ENCODE measurements at regions of chr3 and their contacts with region 1.

Region 1: GRCh38 chr3:64484289-64484992 is 203.4 kb downstream of the ADAMTS9 start:
- DNase-seq: peak; percentile 81
- H3K4me3 ChIP-seq: no peak overlapping the region
- H3K27ac ChIP-seq: no peak overlapping the region
- H3K4me1 ChIP-seq: peaks cover 4% of the 10 kb centered on the region
- H3K27me3 ChIP-seq: peaks cover 8 to 13% of the 10 kb centered on the region in 2 experiments
- CTCF ChIP-seq: peak; percentile 78 to 81
- POLR2A ChIP-seq: no peak

Region 2: GRCh38 chr3:64023187-64023848 is 461.1 kb before region 1 on chr3 and contains the start of gene PSMD6:
- CTCF ChIA-PET with region 1: interaction called, 62 read pairs
- POLR2A ChIA-PET with region 1: no interaction called
- dilution Hi-C with region 1: no loop called
- intact Hi-C with region 1: loop called (anchors 2 kb)
- DNase-seq: peak; percentile 91
- H3K4me3 ChIP-seq: peak within 1 kb of the TSS; percentile 40 to 83 (median 72)
- H3K27ac ChIP-seq: peak within 1 kb of the TSS; percentile 61
- H3K4me1 ChIP-seq: peaks cover 11% of the 10 kb centered on the region
- H3K27me3 ChIP-seq: peaks cover 9 to 19% of the 10 kb centered on the region in 2 experiments
- CTCF ChIP-seq: peak; percentile 98 to 100
- POLR2A ChIP-seq: peak; percentile 83
- total RNA-seq, gene PSMD6: 89.4 and 90.8 TPM in 2 replicates

Region 3: GRCh38 chr3:64440498-64440897 is 43.9 kb before region 1 on chr3:
- CTCF ChIA-PET with region 1: no interaction called
- POLR2A ChIA-PET with region 1: no interaction called
- dilution Hi-C with region 1: no loop called
- intact Hi-C with region 1: no loop called
- DNase-seq: peak; percentile 15
- H3K4me3 ChIP-seq: no peak overlapping the region
- H3K27ac ChIP-seq: no peak overlapping the region
- H3K4me1 ChIP-seq: no peaks in the 10 kb centered on the region
- H3K27me3 ChIP-seq: peaks cover 34 to 37% of the 10 kb centered on the region in 2 experiments
- CTCF ChIP-seq: no peak
- POLR2A ChIP-seq: no peak

Region 4: GRCh38 chr3:64575211-64575844 is 90.9 kb after region 1 on chr3:
- CTCF ChIA-PET with region 1: no interaction called
- POLR2A ChIA-PET with region 1: no interaction called
- dilution Hi-C with region 1: no loop called
- intact Hi-C with region 1: no loop called
- DNase-seq: peak; percentile 35
- H3K4me3 ChIP-seq: no peak overlapping the region
- H3K27ac ChIP-seq: no peak overlapping the region
- H3K4me1 ChIP-seq: peaks cover 5% of the 10 kb centered on the region
- H3K27me3 ChIP-seq: no peaks in the 10 kb centered on the region
- CTCF ChIP-seq: peak; percentile 46 to 54
- POLR2A ChIP-seq: no peak